GM18951 (cell line): ENCODE measurements at regions of chr2 and their contacts with region 1.

Region 1: DNA sequence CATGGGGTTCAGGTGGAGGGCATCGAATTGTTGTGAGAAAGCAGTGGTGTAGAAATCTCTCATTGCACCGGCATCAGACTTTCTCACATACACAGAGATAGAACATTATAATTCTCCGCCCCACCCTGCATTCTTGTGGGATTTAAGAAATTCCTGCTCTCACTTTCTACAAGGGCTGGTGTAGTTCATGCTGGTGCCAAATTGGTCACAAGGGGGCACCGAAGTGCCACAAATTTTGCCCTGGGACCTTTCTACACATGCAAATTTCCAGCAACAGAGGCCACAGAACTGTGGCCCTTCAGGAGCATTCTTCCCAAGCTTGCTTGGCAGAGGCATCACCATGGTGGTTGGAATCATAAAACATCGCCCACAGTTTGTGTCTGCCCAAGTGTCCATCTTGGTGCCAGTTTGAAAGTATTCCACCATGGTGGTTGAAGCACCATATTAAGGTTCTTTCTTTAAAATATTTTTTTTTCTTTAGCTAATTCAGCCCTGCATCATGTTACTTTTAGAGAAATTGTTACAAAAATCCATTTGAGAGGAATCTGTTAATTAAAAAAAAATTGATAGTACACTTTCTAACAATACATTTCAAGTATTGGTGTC is 521.2 kb upstream of the FANCL start:
- POLR2A ChIP-seq: no peak

Region 2: DNA sequence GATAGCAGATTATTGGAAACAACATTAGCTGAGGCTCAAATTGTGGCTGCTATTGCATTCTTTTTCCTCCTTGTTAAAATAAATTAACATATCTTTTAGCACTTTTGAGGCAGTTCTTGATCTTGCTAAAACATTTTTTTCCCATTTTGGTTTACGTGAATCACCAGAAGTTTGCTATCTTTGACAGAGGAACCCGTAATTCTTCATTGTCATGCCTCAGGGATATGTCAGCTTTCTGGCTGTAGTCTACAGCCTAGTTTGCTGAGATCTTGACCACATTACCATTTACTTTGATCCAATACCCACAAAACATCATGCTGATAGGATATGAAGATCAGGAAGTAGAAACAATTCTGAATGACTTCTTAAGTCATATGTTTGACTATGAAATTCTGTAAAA is 496.1 kb before region 1 on chr2:
- in situ Hi-C with region 1: no loop called
- POLR2A ChIP-seq: no peak

Region 3: GRCh38 chr2:59256290-59256689 is 494.0 kb after region 1 on chr2:
- in situ Hi-C with region 1: no loop called
- POLR2A ChIP-seq: no peak

Region 4: GRCh38 chr2:60550178-60550983 is 1788.1 kb after region 1 on chr2:
- in situ Hi-C with region 1: loop called (anchors 25 kb)
- POLR2A ChIP-seq: no peak